Left ventricle myocardium inferior (tissue), 1 donor: ENCODE measurements at regions of chr13 and their contacts with region 1.

Region 1: DNA sequence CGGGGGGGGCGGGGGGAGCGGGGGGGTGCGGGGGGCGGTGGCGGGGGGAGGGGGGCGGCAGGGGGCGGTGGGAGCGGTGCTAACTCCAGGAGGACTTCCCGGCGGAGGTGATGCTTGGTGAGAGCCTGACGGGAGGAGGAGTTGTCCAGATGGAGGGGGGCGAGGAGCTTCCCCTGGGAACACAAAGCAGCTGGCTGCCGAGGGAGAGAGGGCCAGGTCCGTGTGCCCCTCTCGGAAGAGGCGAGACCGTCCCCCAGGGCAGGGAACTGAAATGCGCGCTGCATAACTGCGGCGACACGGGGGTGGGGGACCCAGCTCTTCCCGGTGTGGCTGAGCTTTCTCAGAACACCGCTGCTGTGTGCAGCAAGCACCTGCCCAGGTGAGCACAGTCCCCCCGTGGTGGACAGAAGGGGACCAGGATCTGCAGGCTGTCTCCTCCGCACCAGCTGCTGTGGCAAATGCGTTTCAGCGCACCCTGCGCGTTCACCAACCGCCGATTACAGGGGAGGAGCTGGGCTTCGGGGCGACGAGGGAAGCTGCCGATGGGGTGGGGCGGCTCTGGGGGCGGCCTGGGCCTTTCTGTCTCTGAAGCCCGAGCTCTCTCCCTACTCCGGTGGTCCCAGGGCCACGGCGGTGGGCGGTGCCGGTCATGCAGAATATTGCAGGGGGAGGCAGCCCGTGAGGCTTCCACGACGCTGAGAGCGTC is 54.7 kb upstream of the F7 start:
- DNase-seq: no peak
- H3K4me3 ChIP-seq: peak overlapping the region; percentile 37
- H3K27ac ChIP-seq: no peak overlapping the region
- H3K4me1 ChIP-seq: peaks cover 48% of the 10 kb centered on the region
- H3K27me3 ChIP-seq: peaks cover 10% of the 10 kb centered on the region
- CTCF ChIP-seq: no peak

Region 2: DNA sequence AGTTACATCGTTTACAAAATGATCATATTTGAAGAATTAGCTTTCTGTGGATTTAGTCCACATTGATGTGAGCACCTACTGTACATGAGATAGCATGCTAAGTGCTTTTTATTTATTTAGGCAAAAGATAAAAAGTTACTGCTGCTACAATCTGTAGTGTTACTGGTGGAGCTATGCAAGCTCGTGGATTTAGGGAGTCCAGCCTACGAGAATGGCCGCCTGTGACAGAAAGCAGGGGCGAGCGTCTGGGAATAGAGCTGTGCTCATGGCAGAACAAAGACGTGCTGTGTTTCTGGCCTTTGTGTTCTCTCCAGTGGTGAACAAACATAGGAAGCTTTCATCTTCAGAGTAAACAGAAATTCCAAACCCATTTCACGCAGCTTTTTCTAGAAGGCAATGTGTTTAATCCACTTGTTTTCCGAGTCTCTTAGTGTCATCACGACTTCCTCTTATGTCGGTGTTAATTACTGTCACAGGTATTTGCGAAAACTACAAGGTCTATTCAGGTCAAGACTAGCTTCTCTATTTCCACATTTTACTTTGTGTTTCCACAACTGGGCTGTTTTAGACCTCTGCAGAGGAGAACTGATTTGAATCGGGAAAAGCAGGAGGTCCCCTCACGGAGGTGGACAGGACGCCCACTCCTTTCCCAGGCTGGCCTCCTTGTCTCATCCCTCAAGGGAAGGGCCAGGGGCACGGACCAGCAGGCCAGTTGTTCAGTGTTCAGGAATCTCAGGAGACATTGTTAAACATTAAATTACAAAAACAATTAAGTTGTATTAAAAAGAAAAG is 293.7 kb before region 1 on chr13:
- intact Hi-C with region 1: loop called (anchors 5 kb)
- DNase-seq: no peak
- H3K4me3 ChIP-seq: no peak overlapping the region
- H3K27ac ChIP-seq: no peak overlapping the region
- H3K4me1 ChIP-seq: peaks cover 44% of the 10 kb centered on the region
- H3K27me3 ChIP-seq: no peaks in the 10 kb centered on the region
- CTCF ChIP-seq: no peak